Posterior vena cava (tissue), 2 donors: ENCODE measurements at regions of chr15 and their contacts with region 1.

Region 1: GRCh38 chr15:25933456-25934158 is 70.5 kb upstream of the ATP10A start:
- DNase-seq: peak; percentile 93

Region 2: DNA sequence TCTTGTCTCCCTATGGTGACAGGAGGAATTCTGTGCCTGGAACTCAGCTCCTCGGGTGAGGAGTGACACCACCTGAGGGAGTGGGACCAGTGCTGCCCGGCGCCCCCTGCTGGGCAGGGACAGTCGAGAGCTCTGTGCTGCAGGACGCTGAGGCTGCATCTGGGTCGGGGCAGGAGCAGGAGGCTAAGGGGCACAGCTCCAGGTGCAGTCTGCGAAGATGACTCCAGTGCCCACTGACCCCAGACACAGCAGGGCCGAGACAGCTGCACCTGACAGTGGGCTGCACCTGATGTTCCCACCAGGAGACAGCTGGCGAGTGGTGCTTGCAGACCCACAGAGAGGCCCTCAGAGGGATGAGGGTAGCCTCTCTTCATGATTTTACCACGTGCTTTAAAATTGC is 223.4 kb before region 1 on chr15:
- intact Hi-C with region 1: loop called in 1 of 2 experiments (anchors 10 kb)
- DNase-seq: peak; percentile 72

Region 3: GRCh38 chr15:26001201-26001600 is 67.6 kb after region 1 on chr15:
- intact Hi-C with region 1: no loop called
- DNase-seq: no peak